Esophagus muscularis mucosa (tissue), 4 donors: ENCODE measurements at regions of chr7 and their contacts with region 1.

Region 1: GRCh38 chr7:141014524-141015395 is at the start of gene MRPS33:
- DNase-seq: peak; percentile 97
- H3K4me3 ChIP-seq: peak within 1 kb of the TSS; percentile 65 to 80 (median 68)
- H3K27ac ChIP-seq: peak within 1 kb of the TSS; percentile 86 to 91 (median 86)
- H3K4me1 ChIP-seq: peaks cover 11 to 24% (median 14%) of the 10 kb centered on the region in 4 donors
- H3K27me3 ChIP-seq: no peaks in the 10 kb centered on the region
- CTCF ChIP-seq: peak; percentile 24 to 64 (median 52)
- EP300 ChIP-seq: peak; percentile 31
- POLR2A ChIP-seq: no peak
- total RNA-seq, gene MRPS33: 13.6 to 27.8 (median 25.3) TPM

Region 2: DNA sequence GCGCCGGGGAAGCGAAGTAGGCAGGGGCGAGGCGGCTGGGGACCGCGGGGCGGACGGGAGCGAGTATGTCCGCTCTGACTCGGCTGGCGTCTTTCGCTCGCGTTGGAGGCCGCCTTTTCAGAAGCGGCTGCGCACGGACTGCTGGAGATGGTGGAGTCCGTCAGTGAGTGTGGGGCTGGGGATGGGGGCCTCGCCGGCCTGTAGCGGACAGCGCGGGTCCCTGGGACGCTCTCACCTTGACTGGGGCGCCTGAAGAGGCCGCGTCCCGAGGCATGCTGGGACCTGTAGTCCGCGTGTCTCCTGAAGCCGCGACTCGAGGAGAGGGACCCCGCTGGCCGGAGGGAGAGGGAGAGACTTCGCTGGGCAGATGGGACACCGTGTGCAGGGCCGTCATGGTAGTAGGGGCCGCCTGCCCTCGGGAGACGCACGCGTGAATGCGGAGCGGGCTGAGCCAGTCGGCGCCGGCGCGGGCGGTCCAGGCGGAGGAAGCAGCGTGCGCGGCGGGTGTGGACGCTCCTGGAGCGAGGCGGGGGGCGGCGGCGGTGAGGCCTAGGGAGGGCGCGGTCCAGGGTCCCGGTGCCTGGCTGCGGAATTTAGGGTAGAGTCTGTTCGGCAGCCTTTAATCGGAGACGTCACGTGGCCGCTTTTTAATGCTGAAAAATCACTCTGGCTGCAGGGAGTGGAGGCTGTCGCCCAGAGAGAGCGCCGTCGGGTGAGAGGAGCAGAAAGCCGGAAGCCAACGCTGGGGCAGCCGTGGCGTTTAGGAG is 317.9 kb before region 1 on chr7 and contains the start of gene NDUFB2:
- intact Hi-C with region 1: loop called (anchors 10 kb)
- DNase-seq: peak; percentile 94
- H3K4me3 ChIP-seq: peak within 1 kb of the TSS; percentile 73 to 99 (median 87)
- H3K27ac ChIP-seq: peak within 1 kb of the TSS; percentile 89 to 94 (median 93)
- H3K4me1 ChIP-seq: peaks cover 29 to 37% (median 34%) of the 10 kb centered on the region in 4 donors
- H3K27me3 ChIP-seq: no peaks in the 10 kb centered on the region
- CTCF ChIP-seq: no peak
- EP300 ChIP-seq: no peak
- POLR2A ChIP-seq: peak; percentile 88
- total RNA-seq, gene NDUFB2: 235 to 279 (median 262) TPM

Region 3: GRCh38 chr7:140810830-140811556 is 203.8 kb before region 1 on chr7:
- intact Hi-C with region 1: loop called (anchors 1 kb)
- DNase-seq: peak; percentile 92
- H3K4me3 ChIP-seq: no peak overlapping the region
- H3K27ac ChIP-seq: no peak overlapping the region
- H3K4me1 ChIP-seq: peaks cover 0 to 13% (median 9%) of the 10 kb centered on the region in 4 donors
- H3K27me3 ChIP-seq: no peaks in the 10 kb centered on the region
- CTCF ChIP-seq: peak; percentile 67 to 74 (median 72)
- EP300 ChIP-seq: no peak
- POLR2A ChIP-seq: no peak

Region 4: DNA sequence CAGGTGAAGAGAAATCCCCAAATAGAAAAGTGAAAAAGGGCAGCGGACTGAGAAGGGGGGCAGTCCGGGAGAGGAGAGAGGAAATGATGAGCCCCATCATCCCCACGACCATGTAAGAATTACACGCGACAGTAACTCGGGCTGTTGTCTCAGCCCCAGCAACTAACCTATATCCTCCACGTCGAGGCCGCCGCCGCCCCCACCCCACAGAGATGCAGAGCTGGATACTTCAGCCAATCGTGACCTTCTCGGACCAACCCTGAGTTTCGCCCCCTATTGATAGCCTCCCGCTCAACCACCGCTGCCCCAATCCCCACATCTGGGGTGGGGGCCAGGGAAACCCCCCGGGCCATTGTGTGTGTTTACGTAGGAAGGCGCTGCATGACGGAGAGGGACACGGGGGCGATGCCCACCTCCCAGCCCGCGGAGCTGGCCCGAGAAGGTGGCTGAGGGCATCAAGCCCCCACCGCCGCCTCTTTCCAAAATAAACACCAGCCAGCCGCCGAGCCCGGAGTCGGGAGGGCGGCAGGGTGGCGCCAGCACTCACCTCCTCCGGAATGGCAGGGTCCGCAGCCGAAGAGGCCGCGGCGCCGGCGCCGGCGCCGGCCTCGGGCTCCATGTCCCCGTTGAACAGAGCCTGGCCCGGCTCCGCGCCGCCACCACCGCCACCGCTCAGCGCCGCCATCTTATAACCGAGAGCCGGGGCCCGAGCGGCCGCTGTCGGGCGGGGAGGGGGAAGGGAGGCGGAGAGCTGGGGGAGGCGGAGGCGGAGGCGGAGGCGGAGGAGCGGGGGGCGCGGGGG is 90.5 kb before region 1 on chr7:
- intact Hi-C with region 1: loop called (anchors 2 kb)
- DNase-seq: peak; percentile 94
- H3K4me3 ChIP-seq: peak overlapping the region; percentile 89 to 100 (median 99)
- H3K27ac ChIP-seq: peak overlapping the region; percentile 99 to 100 (median 100)
- H3K4me1 ChIP-seq: peaks cover 24 to 49% (median 41%) of the 10 kb centered on the region in 4 donors
- H3K27me3 ChIP-seq: no peaks in the 10 kb centered on the region
- CTCF ChIP-seq: peak; percentile 43 to 45 (median 44)
- EP300 ChIP-seq: no peak
- POLR2A ChIP-seq: no peak

Region 5: GRCh38 chr7:141541375-141541774 is 526.6 kb after region 1 on chr7:
- intact Hi-C with region 1: loop called (anchors 10 kb)
- DNase-seq: no peak
- H3K4me3 ChIP-seq: no peak overlapping the region
- H3K27ac ChIP-seq: no peak overlapping the region
- H3K4me1 ChIP-seq: no peaks in the 10 kb centered on the region
- H3K27me3 ChIP-seq: no peaks in the 10 kb centered on the region
- CTCF ChIP-seq: no peak
- EP300 ChIP-seq: no peak
- POLR2A ChIP-seq: no peak